ENCODE measurements at regions of chr10 and their contacts with region 1.

Region 1: GRCh38 chr10:23314835-23315239 is 29.8 kb downstream of the C10orf67 start:
- DNase-seq: peak in 4 of 5 donors; percentile 20 to 64 (median 40)
- H3K4me3 ChIP-seq: no peak overlapping the region
- H3K4me3 Mint-ChIP-seq: no peak overlapping the region
- H3K27ac ChIP-seq: no peak overlapping the region
- H3K27ac Mint-ChIP-seq: no peak overlapping the region
- H3K4me1 ChIP-seq: no peaks in the 10 kb centered on the region
- H3K4me1 Mint-ChIP-seq: peaks cover 0 to 4% (median 0%) of the 10 kb centered on the region in 3 donors
- H3K27me3 ChIP-seq: no peaks in the 10 kb centered on the region
- H3K27me3 Mint-ChIP-seq: peaks cover 0 to 6% of the 10 kb centered on the region in 2 donors

Region 2: DNA sequence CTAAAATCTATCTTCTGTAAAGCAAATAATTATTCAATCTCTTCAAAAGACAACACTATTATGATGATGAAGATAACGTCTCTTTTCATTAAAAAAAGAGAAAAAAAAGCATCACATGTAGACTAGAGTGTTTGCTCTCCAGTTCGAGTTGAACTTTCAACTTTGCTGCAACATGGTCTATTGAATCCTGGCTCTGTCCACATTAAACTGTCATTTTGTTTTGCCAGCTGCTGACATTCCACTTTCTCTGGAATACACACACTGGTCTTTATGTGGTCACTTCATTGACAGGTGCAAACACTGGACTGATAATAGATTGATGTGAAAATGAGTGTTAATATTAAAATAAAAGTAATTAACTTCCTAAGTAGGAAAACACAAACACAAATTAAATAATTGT is 61.1 kb before region 1 on chr10:
- CTCF ChIA-PET with region 1: no interaction called
- POLR2A ChIA-PET with region 1: no interaction called
- DNase-seq: no peak
- H3K4me3 ChIP-seq: no peak overlapping the region
- H3K4me3 Mint-ChIP-seq: no peak overlapping the region
- H3K27ac ChIP-seq: no peak overlapping the region
- H3K27ac Mint-ChIP-seq: no peak overlapping the region
- H3K4me1 ChIP-seq: no peaks in the 10 kb centered on the region
- H3K4me1 Mint-ChIP-seq: no peaks in the 10 kb centered on the region
- H3K27me3 ChIP-seq: no peaks in the 10 kb centered on the region
- H3K27me3 Mint-ChIP-seq: peaks cover 5 to 8% of the 10 kb centered on the region in 2 donors

Region 3: GRCh38 chr10:23525406-23525805 is 210.6 kb after region 1 on chr10:
- CTCF ChIA-PET with region 1: interaction called, 42 read pairs
- POLR2A ChIA-PET with region 1: no interaction called
- DNase-seq: no peak
- H3K4me3 ChIP-seq: no peak overlapping the region
- H3K4me3 Mint-ChIP-seq: no peak overlapping the region
- H3K27ac ChIP-seq: no peak overlapping the region
- H3K27ac Mint-ChIP-seq: no peak overlapping the region
- H3K4me1 ChIP-seq: no peaks in the 10 kb centered on the region
- H3K4me1 Mint-ChIP-seq: no peaks in the 10 kb centered on the region
- H3K27me3 ChIP-seq: no peaks in the 10 kb centered on the region
- H3K27me3 Mint-ChIP-seq: peaks cover 4 to 22% of the 10 kb centered on the region in 2 donors

Region 4: DNA sequence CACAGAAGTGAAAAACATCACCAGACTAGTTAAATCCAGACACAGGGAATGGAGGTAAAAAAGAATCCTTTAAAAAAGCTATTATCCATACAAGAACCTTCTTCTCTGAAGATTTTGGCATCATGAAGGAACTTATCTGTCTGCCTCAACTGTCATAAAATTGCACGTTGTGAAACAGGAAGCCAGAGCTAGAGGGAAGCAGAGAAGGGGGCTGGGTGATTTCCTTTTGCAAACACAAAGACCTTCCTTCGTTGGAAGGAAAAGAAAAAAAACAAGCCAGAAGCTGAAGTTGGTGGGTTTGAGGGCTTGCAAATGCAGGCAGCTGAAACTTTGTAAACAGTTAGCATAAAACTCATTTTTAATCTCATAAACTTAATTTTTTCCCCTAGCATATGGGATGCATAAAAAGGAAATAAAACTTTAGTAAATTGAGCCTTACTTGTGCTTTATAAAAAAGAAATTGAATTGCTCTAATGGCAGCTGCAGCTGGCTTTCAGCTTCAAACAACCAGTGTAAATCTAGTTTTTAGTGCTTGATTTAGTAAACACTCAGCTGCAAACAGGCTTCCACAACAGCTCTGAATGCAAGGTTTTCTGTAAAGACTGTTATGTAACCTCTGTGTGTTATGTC is 225.7 kb after region 1 on chr10:
- CTCF ChIA-PET with region 1: interaction called, 10 read pairs
- POLR2A ChIA-PET with region 1: no interaction called
- DNase-seq: peak in 1 of 5 donors; percentile 30
- H3K4me3 ChIP-seq: peak overlapping the region; percentile 1
- H3K4me3 Mint-ChIP-seq: peak overlapping the region in 5 of 7 donors; percentile 13 to 63 (median 58)
- H3K27ac ChIP-seq: no peak overlapping the region
- H3K27ac Mint-ChIP-seq: peak overlapping the region in 5 of 8 donors; percentile 8 to 66 (median 56)
- H3K4me1 ChIP-seq: peaks cover 34% of the 10 kb centered on the region
- H3K4me1 Mint-ChIP-seq: peaks cover 20 to 23% (median 22%) of the 10 kb centered on the region in 3 donors
- H3K27me3 ChIP-seq: no peaks in the 10 kb centered on the region
- H3K27me3 Mint-ChIP-seq: peaks cover under 1 to 9% of the 10 kb centered on the region in 2 donors

Region 5: GRCh38 chr10:24197263-24197662 is 882.4 kb after region 1 on chr10:
- CTCF ChIA-PET with region 1: interaction called, 10 read pairs
- POLR2A ChIA-PET with region 1: no interaction called
- DNase-seq: no peak
- H3K4me3 ChIP-seq: no peak overlapping the region
- H3K4me3 Mint-ChIP-seq: no peak overlapping the region
- H3K27ac ChIP-seq: no peak overlapping the region
- H3K27ac Mint-ChIP-seq: peak overlapping the region in 1 of 8 donors; percentile 64
- H3K4me1 ChIP-seq: no peaks in the 10 kb centered on the region
- H3K4me1 Mint-ChIP-seq: no peaks in the 10 kb centered on the region
- H3K27me3 ChIP-seq: no peaks in the 10 kb centered on the region
- H3K27me3 Mint-ChIP-seq: peaks cover 0 to 4% of the 10 kb centered on the region in 2 donors

Measured in CD8-positive, alpha-beta memory T cell (primary cell).